Mucosa of descending colon (tissue), 3 donors: ENCODE measurements at regions of chr11 and their contacts with region 1.

Region 1: GRCh38 chr11:63567044-63567840 is 4.1 kb upstream of the PLAAT2 start:
- DNase-seq: peak in 1 of 3 donors; percentile 59
- ATAC-seq: peak; percentile 79
- H3K4me3 ChIP-seq: no peak overlapping the region
- H3K4me1 ChIP-seq: peaks cover 26% of the 10 kb centered on the region
- CTCF ChIP-seq: no peak

Region 2: GRCh38 chr11:62880803-62881578 is 686.3 kb before region 1 on chr11 and contains the start of gene SLC3A2:
- intact Hi-C with region 1: loop called in 1 of 2 experiments (anchors 10 kb)
- DNase-seq: peak; percentile 94 to 95 (median 94)
- ATAC-seq: peak; percentile 90
- H3K4me3 ChIP-seq: peak within 1 kb of the TSS; percentile 93
- H3K4me1 ChIP-seq: peaks cover 32% of the 10 kb centered on the region
- CTCF ChIP-seq: peak; percentile 59
- total RNA-seq, gene SLC3A2: 116 to 127 (median 124) TPM

Region 3: DNA sequence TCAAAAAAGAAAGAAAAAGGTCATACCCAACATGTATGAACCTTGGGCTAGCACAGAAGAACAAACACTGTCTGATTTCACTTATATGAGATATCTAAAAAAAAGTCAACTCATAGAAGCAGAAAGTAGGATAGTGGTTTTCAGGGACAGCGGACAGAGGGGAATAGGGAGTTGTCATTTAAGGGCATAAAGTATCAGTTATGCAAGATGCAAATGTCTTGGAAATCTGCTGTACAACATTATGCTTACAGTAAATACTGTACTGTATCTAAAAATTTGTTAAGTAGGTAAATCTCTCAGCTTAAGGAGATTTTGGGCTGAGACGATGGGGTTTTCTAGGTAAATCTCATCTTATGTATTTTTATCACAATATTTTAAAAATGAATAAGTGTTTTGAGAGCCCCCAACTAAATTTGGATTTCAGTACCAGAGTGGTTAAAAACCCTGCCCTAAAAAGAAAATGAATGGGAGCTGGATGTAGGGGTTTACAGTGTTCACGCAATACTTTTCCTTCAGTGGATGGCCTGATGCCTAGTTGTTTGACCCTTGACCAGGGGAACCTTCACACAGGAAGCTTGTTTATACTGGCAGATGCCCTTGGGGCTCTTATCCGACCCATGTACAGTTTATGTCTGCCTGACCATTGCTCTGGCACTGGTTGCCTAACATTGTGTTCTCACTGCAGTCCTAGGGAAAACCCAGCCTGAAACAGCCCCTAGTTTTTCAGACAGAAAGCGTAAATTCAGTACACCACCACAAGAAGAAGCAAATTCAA is 162.9 kb before region 1 on chr11:
- intact Hi-C with region 1: no loop called
- DNase-seq: no peak
- ATAC-seq: no peak
- H3K4me3 ChIP-seq: no peak overlapping the region
- H3K4me1 ChIP-seq: no peaks in the 10 kb centered on the region
- CTCF ChIP-seq: no peak

Region 4: DNA sequence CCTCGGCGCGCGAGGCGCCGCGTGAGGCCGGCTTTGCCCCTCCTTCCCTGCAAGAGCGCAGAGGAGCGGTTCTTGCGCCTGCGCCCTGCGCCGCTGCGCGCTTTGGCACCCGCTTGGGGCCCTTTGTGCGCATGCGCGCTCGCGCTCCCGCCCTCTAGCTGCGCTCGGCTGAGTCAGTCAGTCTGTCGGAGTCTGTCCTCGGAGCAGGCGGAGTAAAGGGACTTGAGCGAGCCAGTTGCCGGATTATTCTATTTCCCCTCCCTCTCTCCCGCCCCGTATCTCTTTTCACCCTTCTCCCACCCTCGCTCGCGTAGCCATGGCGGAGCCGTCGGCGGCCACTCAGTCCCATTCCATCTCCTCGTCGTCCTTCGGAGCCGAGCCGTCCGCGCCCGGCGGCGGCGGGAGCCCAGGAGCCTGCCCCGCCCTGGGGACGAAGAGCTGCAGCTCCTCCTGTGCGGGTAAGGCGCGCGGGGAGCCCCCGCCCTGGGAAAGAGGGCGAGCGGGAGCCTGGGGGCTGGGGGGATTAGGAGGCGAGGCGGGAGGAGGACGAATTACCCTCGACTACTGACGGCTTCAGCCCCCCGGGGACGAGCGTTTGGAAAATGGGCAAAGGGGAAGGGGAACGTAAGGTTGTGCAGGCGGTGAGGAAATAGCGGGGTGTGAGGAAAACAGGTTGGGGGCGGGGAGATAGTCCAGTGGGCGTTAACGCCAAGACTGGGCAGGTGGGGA is 114.2 kb after region 1 on chr11 and contains the start of gene RTN3:
- intact Hi-C with region 1: no loop called
- DNase-seq: peak; percentile 97 to 99 (median 99)
- ATAC-seq: peak; percentile 97
- H3K4me3 ChIP-seq: peak within 1 kb of the TSS; percentile 46
- H3K4me1 ChIP-seq: peaks cover 16% of the 10 kb centered on the region
- CTCF ChIP-seq: peak; percentile 12
- total RNA-seq, gene RTN3: 111 to 129 (median 115) TPM